Mammary epithelial cell (primary cell): ENCODE measurements at regions of chr9 and their contacts with region 1.

Region 1: GRCh38 chr9:85258823-85259370 is 482.9 kb downstream of the AGTPBP1 start:
- DNase-seq: peak; percentile 69
- H3K4me3 ChIP-seq: no peak overlapping the region
- H3K27ac ChIP-seq: no peak overlapping the region
- H3K4me1 ChIP-seq: no peaks in the 10 kb centered on the region
- H3K27me3 ChIP-seq: peaks cover 2% of the 10 kb centered on the region
- CTCF ChIP-seq: peak; percentile 87 to 98

Region 2: DNA sequence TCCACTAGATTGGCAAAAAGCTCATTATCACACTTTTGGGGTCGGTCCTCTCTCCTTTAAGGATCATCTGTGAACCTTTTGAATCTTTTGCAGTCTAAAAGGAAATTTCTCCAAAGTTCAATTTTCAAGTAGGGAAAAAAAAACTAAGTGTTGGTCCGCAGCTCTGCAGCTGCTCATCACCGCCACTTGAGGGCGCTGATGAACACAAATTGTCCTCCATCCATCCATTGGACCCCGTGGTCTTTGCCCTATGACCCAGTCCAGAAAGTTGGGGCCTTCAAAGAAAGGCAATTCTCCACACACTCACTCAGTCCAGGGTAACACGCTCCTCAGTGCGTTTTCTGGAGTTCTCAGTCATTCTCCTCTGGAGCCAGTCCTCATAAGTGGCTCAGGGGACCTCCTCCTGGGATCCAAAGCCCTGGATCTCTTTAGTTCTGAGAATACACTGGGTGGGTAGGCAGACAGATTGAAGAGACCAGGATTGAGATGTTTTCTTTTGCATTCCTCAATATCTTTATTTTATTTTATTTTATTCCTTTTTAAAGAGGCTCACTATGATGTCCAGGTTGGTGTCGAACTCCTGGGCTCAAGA is 854.7 kb before region 1 on chr9:
- CTCF ChIA-PET with region 1: no interaction called
- dilution Hi-C with region 1: no loop called
- in situ Hi-C with region 1: loop called (anchors 10 to 25 kb)
- intact Hi-C with region 1: no loop called
- DNase-seq: no peak
- H3K4me3 ChIP-seq: no peak overlapping the region
- H3K27ac ChIP-seq: no peak overlapping the region
- H3K4me1 ChIP-seq: no peaks in the 10 kb centered on the region
- H3K27me3 ChIP-seq: no peaks in the 10 kb centered on the region
- CTCF ChIP-seq: peak; percentile 57 to 76

Region 3: GRCh38 chr9:84932915-84933527 is 325.9 kb before region 1 on chr9:
- CTCF ChIA-PET with region 1: no interaction called
- dilution Hi-C with region 1: no loop called
- in situ Hi-C with region 1: loop called in 1 of 2 experiments (anchors 25 kb)
- intact Hi-C with region 1: loop called (anchors 1 kb)
- DNase-seq: peak; percentile 27
- H3K4me3 ChIP-seq: no peak overlapping the region
- H3K27ac ChIP-seq: no peak overlapping the region
- H3K4me1 ChIP-seq: no peaks in the 10 kb centered on the region
- H3K27me3 ChIP-seq: no peaks in the 10 kb centered on the region
- CTCF ChIP-seq: peak; percentile 32 to 59

Region 4: GRCh38 chr9:85067792-85068191 is 191.1 kb before region 1 on chr9:
- CTCF ChIA-PET with region 1: no interaction called
- dilution Hi-C with region 1: no loop called
- in situ Hi-C with region 1: no loop called
- intact Hi-C with region 1: loop called (anchors 1 kb)
- DNase-seq: no peak
- H3K4me3 ChIP-seq: no peak overlapping the region
- H3K27ac ChIP-seq: no peak overlapping the region
- H3K4me1 ChIP-seq: no peaks in the 10 kb centered on the region
- H3K27me3 ChIP-seq: no peaks in the 10 kb centered on the region
- CTCF ChIP-seq: no peak

Region 5: DNA sequence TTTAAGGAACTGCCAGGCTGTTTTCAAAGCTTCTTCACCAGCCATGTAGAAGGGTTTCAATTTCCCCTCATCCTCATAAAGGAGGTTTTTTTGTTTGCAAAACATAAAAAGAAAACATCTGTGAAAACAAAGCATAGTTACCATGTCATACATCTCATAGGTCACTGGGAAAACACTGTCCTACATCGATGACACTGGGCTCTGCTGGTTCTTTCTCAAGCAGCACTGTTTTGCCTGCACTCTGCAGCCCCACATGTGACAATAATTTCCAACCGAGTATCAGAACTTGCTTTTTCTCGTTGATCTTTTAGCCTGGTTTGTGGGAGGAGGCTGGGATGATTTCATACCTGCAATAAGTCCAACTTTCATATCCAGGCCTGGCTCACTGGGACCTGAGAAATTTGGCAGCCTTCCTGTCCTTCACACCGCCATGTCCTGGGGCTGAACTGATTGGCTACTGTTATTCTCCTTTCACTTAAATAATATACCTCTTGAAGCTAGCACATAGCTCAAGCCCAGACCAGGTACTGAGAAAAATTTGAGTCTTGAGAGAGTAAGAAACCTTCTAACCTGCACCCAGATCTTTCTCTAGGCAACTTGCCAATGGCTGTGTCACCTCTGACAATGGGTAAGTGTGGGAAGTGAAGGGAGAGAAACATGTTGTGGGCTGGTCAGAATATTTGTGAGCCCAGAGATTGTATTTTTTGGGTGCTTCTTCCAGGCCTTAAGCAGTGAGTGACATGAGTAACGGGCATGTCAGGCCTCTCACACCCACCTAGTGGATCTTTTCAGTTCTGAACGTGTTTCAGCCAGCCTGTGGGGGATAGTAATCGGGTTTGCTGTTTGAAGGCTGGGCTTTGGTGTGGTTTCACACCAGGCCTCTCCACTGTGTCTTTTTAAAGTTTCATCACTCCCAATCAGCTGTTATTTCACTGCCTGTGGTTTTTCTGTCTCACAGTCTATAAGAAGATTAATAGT is 86.6 kb before region 1 on chr9:
- CTCF ChIA-PET with region 1: no interaction called
- dilution Hi-C with region 1: loop called (anchors 25 kb)
- in situ Hi-C with region 1: no loop called
- intact Hi-C with region 1: no loop called
- DNase-seq: peak; percentile 93
- H3K4me3 ChIP-seq: no peak overlapping the region
- H3K27ac ChIP-seq: peak overlapping the region; percentile 9
- H3K4me1 ChIP-seq: peaks cover 22% of the 10 kb centered on the region
- H3K27me3 ChIP-seq: no peaks in the 10 kb centered on the region
- CTCF ChIP-seq: peak in 1 of 2 donors; percentile 13